Activated T-helper 1 cell treated with anti-CD3 and anti-CD28 coated beads, Interleukin-12 subunit alpha, Interleukin-12 subunit beta, Interleukin-2, Interleukin-4 antibody, amounts not matched to agents 30 ng/mL and 10 ng/mL and 1 ng/mL, durations not matched to agents 14 hours and 24 hours and 36 hours (primary cell): ENCODE measurements at regions of chr1 and their contacts with region 1.

Region 1: GRCh38 chr1:175481126-175482066 is 262.0 kb downstream of the TNR start:
- DNase-seq: no peak
- H3K4me3 Mint-ChIP-seq: no peak overlapping the region
- H3K27ac Mint-ChIP-seq: no peak overlapping the region
- H3K4me1 Mint-ChIP-seq: no peaks in the 10 kb centered on the region
- H3K27me3 Mint-ChIP-seq: peaks cover 15% of the 10 kb centered on the region

Region 2: DNA sequence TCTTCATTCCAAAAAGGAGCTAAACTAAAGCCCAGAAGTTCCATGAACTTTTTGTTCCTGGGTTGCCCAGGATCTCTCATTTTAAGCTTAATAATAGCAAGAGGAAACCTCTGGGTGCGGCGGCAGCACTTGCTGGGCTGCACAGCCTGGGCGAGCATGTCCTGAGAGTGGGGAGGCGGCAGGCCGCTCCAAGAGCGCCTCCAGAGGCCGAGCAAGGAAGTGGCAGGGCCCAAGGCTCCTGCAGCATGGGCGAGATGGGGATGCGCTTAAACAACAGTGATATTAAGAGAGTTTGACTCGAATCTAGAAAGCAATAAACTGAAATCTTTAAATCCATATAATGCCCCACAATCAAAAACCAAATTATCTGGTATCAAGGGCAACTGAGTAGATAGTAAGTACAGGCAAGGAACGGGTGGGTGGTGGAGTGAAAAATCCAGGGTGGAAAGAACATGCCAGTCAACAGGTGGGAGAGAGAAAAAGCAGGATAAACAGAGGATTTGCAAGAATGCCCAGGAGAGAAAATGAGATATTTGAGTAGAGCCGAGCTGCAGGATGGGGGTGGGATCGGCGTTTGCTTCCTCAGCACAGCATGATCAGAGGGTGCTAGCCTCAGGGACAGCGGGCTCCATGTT is 276.1 kb after region 1 on chr1:
- intact Hi-C with region 1: loop called (anchors 10 kb)
- DNase-seq: peak; percentile 9
- H3K4me3 Mint-ChIP-seq: no peak overlapping the region
- H3K27ac Mint-ChIP-seq: no peak overlapping the region
- H3K4me1 Mint-ChIP-seq: no peaks in the 10 kb centered on the region
- H3K27me3 Mint-ChIP-seq: no peaks in the 10 kb centered on the region